ENCODE measurements at regions of chr19 and their contacts with region 1.

Region 1: DNA sequence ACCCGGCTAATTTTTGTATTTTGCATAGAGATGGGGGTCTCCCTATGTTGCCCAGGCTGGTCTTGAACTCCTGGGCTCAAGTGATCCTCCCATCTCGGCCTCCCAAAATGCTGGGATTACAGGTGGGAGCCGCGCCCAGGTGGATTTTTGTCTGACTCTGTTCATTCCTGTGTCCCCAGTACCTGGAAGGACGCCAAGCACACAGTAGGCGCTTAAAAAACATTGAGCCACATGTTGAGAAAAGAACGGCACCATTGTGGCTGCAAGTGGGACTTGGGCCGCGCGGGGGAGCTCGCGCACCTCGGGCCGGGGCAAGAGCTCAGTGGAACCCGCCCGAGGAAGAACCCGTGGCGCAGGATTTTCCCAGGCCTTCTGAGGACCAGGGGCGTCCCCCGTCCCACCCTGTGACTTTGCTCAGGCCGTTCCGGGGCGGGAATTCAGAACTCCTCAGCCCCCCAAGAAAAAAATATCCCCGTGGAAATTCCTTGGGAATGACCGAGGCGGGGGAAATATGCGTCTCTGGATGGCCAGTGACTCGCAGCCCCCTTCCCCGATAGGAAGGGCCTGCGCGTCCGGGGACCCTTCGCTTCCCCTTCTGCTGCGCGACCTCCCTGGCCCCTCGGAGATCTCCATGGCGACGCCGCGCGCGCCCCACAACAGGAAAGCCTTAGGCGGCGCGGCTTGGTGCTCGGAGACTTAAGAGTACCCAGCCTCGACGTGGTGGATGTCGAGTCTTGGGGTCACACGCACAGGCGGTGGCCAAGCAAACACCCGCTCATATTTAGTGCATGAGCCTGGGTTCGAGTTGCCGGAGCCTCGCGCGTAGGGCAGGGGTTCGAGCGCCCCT is 1.4 kb upstream of the ICAM1 start:
- DNase-seq: no peak
- H3K4me3 ChIP-seq: no peak overlapping the region
- H3K27ac ChIP-seq: no peak overlapping the region
- H3K27me3 ChIP-seq: no peaks in the 10 kb centered on the region
- CTCF ChIP-seq: peak; percentile 95

Region 2: GRCh38 chr19:10286803-10287737 is 17.5 kb after region 1 on chr19 and contains the start of gene ICAM4:
- CTCF ChIA-PET with region 1: interaction called, 6 read pairs
- POLR2A ChIA-PET with region 1: interaction called, 17 read pairs
- DNase-seq: no peak
- H3K4me3 ChIP-seq: peak within 1 kb of the TSS; percentile 7; the same call in 1 of the 2 replicates
- H3K27ac ChIP-seq: peak within 1 kb of the TSS; percentile 21
- H3K27me3 ChIP-seq: no peaks in the 10 kb centered on the region
- CTCF ChIP-seq: no peak
- polyA plus RNA-seq, gene ICAM4: 2.5 and 3.3 TPM in 2 replicates

Region 3: GRCh38 chr19:10292206-10292788 is 22.7 kb after region 1 on chr19:
- CTCF ChIA-PET with region 1: interaction called, 6 read pairs
- POLR2A ChIA-PET with region 1: interaction called, 17 read pairs
- DNase-seq: no peak
- H3K4me3 ChIP-seq: peak overlapping the region; percentile 63
- H3K27ac ChIP-seq: no peak overlapping the region
- H3K27me3 ChIP-seq: peaks cover 8% of the 10 kb centered on the region
- CTCF ChIP-seq: no peak

Region 4: DNA sequence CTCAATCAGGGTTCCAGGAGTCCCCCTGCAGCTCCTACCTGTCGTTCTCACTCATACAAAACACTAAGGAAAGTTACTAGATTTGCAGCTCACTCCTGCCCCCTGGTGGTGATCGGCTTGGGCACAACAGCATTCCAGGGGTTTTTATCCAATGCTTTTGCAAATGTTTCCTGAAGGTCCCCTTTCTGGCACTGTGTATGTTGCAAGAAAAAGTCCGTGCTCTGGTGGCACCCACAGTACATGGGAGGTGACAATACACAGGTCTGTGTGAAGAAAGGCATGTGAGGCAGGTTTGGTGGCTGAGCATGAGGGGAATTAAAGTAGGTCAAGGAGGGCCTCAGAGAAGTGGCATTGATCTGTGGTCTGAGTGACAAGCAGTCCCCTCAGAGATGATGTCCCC is 119.4 kb after region 1 on chr19:
- CTCF ChIA-PET with region 1: interaction called, 85 read pairs
- POLR2A ChIA-PET with region 1: interaction called, 8 read pairs
- DNase-seq: peak; percentile 50
- H3K4me3 ChIP-seq: no peak overlapping the region
- H3K27ac ChIP-seq: peak overlapping the region; percentile 11
- H3K27me3 ChIP-seq: no peaks in the 10 kb centered on the region
- CTCF ChIP-seq: peak; percentile 96

Region 5: GRCh38 chr19:10424011-10424637 is 154.6 kb after region 1 on chr19:
- CTCF ChIA-PET with region 1: no interaction called
- POLR2A ChIA-PET with region 1: no interaction called
- DNase-seq: no peak
- H3K4me3 ChIP-seq: peak overlapping the region; percentile 58
- H3K27ac ChIP-seq: no peak overlapping the region
- H3K27me3 ChIP-seq: peaks cover 7% of the 10 kb centered on the region
- CTCF ChIP-seq: peak; percentile 82